CD4-positive, alpha-beta memory T cell (primary cell): ENCODE measurements at regions of chr10 and their contacts with region 1.

Region 1: GRCh38 chr10:97869091-97870042 is 19.7 kb downstream of the GOLGA7B start:
- DNase-seq: peak; percentile 82 to 87 (median 83)
- H3K4me3 ChIP-seq: no peak overlapping the region
- H3K4me3 Mint-ChIP-seq: peak overlapping the region in 4 of 8 donors; percentile 4 to 64 (median 41)
- H3K27ac ChIP-seq: no peak overlapping the region
- H3K27ac Mint-ChIP-seq: peak overlapping the region; percentile 55 to 87 (median 71)
- H3K4me1 ChIP-seq: peaks cover 16% of the 10 kb centered on the region
- H3K4me1 Mint-ChIP-seq: peaks cover 6 to 14% (median 12%) of the 10 kb centered on the region in 4 donors
- H3K27me3 ChIP-seq: no peaks in the 10 kb centered on the region
- H3K27me3 Mint-ChIP-seq: no peaks in the 10 kb centered on the region

Region 2: DNA sequence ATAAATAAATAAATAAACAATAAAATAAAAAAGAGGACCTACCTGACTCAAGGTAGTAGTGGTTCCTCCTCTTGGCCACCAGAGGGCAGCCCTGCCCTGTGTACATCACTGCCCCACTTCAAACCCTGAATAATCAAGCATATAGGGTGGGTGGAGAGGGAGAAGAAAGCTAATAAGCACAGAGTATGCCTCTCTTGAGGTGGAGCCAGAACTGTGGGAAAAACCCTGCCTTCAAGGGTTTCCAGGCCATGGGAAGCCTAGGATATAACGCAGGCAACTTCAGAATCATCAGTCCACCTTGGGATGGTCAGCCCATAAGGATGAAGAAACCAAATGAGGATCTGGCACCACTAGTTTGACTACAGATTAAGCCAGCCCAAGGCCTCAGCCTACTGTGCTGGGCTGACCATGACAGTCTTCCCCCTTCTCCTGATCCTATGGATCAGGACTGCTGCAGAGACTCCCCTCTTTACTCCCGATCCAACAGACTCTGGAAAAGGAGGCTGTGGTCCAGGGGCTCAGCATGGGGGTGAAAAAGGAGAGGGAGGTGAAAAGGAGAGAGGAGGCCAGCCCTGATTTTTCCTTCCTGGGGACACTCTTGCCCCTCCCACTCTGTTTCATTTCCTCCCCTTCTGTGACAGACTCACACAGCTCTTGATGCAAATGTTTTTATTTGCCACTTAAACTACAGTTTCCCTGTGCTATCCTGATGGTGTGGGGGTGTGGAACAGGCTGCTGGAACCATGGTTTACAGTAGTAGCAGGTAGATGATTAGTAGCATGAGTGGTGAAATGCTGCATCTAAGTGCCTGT is 192.4 kb before region 1 on chr10:
- CTCF ChIA-PET with region 1: interaction called, 5 read pairs
- POLR2A ChIA-PET with region 1: no interaction called
- intact Hi-C with region 1: loop called (anchors 1 kb)
- DNase-seq: peak; percentile 48 to 56 (median 53)
- H3K4me3 ChIP-seq: no peak overlapping the region
- H3K4me3 Mint-ChIP-seq: no peak overlapping the region
- H3K27ac ChIP-seq: no peak overlapping the region
- H3K27ac Mint-ChIP-seq: peak overlapping the region in 4 of 7 donors; percentile 7 to 73 (median 38)
- H3K4me1 ChIP-seq: no peaks in the 10 kb centered on the region
- H3K4me1 Mint-ChIP-seq: peaks cover 0 to 1% (median 0%) of the 10 kb centered on the region in 4 donors
- H3K27me3 ChIP-seq: no peaks in the 10 kb centered on the region
- H3K27me3 Mint-ChIP-seq: no peaks in the 10 kb centered on the region

Region 3: GRCh38 chr10:97736902-97737769 is 132.2 kb before region 1 on chr10 and contains the start of gene ZFYVE27:
- CTCF ChIA-PET with region 1: interaction called, 3 read pairs
- POLR2A ChIA-PET with region 1: interaction called, 9 read pairs
- intact Hi-C with region 1: loop called (anchors 1 kb)
- DNase-seq: peak; percentile 93 to 94 (median 93)
- H3K4me3 ChIP-seq: peak within 1 kb of the TSS; percentile 86 to 87
- H3K4me3 Mint-ChIP-seq: peak within 1 kb of the TSS; percentile 96 to 99 (median 98)
- H3K27ac ChIP-seq: peak within 1 kb of the TSS; percentile 92
- H3K27ac Mint-ChIP-seq: peak within 1 kb of the TSS; percentile 94 to 99 (median 98)
- H3K4me1 ChIP-seq: peaks cover 41% of the 10 kb centered on the region
- H3K4me1 Mint-ChIP-seq: peaks cover 38 to 61% (median 50%) of the 10 kb centered on the region in 4 donors
- H3K27me3 ChIP-seq: no peaks in the 10 kb centered on the region
- H3K27me3 Mint-ChIP-seq: no peaks in the 10 kb centered on the region
- total RNA-seq, gene ZFYVE27: 59.5 to 64.5 TPM

Region 4: GRCh38 chr10:97827778-97828291 is 41.5 kb before region 1 on chr10:
- CTCF ChIA-PET with region 1: interaction called, 31 read pairs
- POLR2A ChIA-PET with region 1: no interaction called
- intact Hi-C with region 1: no loop called
- DNase-seq: no peak
- H3K4me3 ChIP-seq: no peak overlapping the region
- H3K4me3 Mint-ChIP-seq: no peak overlapping the region
- H3K27ac ChIP-seq: no peak overlapping the region
- H3K27ac Mint-ChIP-seq: peak overlapping the region in 2 of 7 donors; percentile 47 to 66
- H3K4me1 ChIP-seq: peaks cover 28% of the 10 kb centered on the region
- H3K4me1 Mint-ChIP-seq: peaks cover 18 to 34% (median 21%) of the 10 kb centered on the region in 4 donors
- H3K27me3 ChIP-seq: no peaks in the 10 kb centered on the region
- H3K27me3 Mint-ChIP-seq: no peaks in the 10 kb centered on the region

Region 5: DNA sequence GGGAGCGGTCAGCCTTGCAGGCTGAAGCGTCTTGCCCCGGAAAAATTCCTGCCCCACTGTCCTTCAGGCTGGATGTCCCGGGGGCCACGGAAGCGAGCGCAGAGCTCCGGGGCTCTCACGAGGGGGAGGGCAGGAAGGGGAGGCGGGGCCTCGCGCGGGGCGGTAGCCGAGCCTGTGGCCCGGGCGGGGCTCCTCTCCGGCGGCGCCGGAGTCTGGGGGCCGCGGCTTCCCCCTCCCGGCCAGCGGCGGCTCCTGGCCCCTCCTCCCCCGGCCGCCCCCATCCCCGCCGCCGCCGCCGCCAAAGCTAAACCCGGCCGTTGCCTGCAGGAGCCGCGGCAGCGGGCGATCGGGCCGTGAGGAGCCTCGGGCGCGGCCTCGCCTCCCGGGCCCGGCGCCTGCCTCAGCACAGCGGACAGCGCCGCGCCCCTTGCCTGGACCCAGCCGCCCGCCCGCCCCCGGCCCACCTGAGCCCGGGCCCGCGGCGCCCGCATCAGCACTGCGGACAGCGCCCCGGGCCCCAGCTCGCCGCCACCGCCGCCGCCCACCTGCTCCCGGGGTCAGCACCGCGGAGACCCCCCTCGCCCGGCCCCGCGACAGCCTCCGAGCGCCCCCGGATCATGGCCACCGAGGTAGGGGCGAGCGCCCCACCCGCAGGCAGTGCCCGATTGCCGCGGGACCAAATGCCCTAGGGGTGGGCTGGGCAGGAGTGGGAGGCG is 19.5 kb before region 1 on chr10 and contains the start of gene GOLGA7B:
- CTCF ChIA-PET with region 1: interaction called, 31 read pairs
- POLR2A ChIA-PET with region 1: interaction called, 56 read pairs
- intact Hi-C with region 1: loop called (anchors 1 kb)
- DNase-seq: peak; percentile 60 to 72 (median 70)
- H3K4me3 ChIP-seq: peak within 1 kb of the TSS; percentile 76 to 79
- H3K4me3 Mint-ChIP-seq: peak within 1 kb of the TSS; percentile 92 to 98 (median 94)
- H3K27ac ChIP-seq: peak within 1 kb of the TSS; percentile 32
- H3K27ac Mint-ChIP-seq: peak within 1 kb of the TSS; percentile 87 to 94 (median 91)
- H3K4me1 ChIP-seq: peaks cover 40% of the 10 kb centered on the region
- H3K4me1 Mint-ChIP-seq: peaks cover 29 to 46% (median 39%) of the 10 kb centered on the region in 4 donors
- H3K27me3 ChIP-seq: no peaks in the 10 kb centered on the region
- H3K27me3 Mint-ChIP-seq: no peaks in the 10 kb centered on the region
- total RNA-seq, gene GOLGA7B: 7.6 to 7.9 TPM